ENCODE measurements at regions of chr3 and their contacts with region 1.

Region 1: DNA sequence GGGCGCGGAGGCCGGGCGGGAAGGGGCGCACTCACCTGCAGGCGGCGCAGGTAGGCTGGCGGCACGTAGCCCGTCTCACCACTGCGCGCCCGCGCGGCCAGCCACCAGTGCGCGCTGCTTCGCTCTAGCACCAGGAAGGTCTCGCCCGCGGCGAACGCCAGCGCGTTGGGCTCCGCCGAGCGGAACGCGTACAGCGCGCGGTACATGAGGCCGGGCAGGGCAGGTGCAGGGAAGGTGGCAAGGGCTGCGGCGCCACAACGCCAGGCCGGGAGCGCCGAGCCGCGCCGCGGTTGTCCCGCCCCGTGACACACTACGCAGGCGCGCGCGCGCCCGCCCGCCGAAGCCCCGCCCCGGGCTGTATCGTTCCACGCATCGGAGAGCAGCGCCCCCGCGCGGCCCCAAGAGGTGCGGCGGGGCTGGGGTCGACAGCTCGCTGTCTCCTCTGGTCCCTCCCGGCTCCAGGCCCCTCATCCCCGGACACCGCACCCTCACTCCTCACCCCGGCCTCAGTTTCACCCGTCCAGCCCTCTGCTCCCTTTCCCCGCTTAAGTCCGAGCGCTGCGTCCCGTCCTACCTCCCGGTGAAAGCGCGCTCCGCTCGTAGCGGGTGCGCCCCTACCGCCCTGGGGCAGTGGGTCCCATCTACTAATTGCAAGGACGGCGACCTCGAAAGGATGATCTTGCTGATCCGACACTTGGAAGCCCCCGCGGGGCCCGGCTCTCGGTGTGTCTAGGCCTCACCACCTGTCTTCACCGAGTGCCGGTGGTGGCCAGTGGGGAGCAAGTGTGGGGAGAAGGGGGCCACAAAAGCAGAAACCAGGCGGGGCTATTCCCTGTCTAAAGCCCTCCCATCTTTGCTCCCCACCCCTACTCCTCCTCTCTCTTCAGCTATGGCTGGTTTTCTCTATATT is at the start of gene NCKIPSD:
- DNase-seq: peak; percentile 87 to 94 (median 90)
- H3K4me3 ChIP-seq: peak within 1 kb of the TSS; percentile 59 to 82
- H3K4me3 Mint-ChIP-seq: peak within 1 kb of the TSS; percentile 87 to 99 (median 94)
- H3K27ac ChIP-seq: peak within 1 kb of the TSS; percentile 77
- H3K27ac Mint-ChIP-seq: peak within 1 kb of the TSS; percentile 81 to 94 (median 92)
- H3K4me1 ChIP-seq: peaks cover 34% of the 10 kb centered on the region
- H3K4me1 Mint-ChIP-seq: peaks cover 17 to 49% (median 27%) of the 10 kb centered on the region in 4 donors
- H3K27me3 ChIP-seq: no peaks in the 10 kb centered on the region
- H3K27me3 Mint-ChIP-seq: no peaks in the 10 kb centered on the region
- total RNA-seq, gene NCKIPSD: 20.1 to 21.7 TPM

Region 2: GRCh38 chr3:48273594-48274211 is 412.2 kb before region 1 on chr3:
- CTCF ChIA-PET with region 1: no interaction called
- POLR2A ChIA-PET with region 1: no interaction called
- intact Hi-C with region 1: loop called (anchors 1 kb)
- DNase-seq: peak; percentile 51 to 66 (median 60)
- H3K4me3 ChIP-seq: no peak overlapping the region
- H3K4me3 Mint-ChIP-seq: no peak overlapping the region
- H3K27ac ChIP-seq: no peak overlapping the region
- H3K27ac Mint-ChIP-seq: peak overlapping the region in 2 of 7 donors; percentile 12 to 74
- H3K4me1 ChIP-seq: peaks cover 15% of the 10 kb centered on the region
- H3K4me1 Mint-ChIP-seq: peaks cover 14 to 27% (median 21%) of the 10 kb centered on the region in 4 donors
- H3K27me3 ChIP-seq: no peaks in the 10 kb centered on the region
- H3K27me3 Mint-ChIP-seq: no peaks in the 10 kb centered on the region

Region 3: DNA sequence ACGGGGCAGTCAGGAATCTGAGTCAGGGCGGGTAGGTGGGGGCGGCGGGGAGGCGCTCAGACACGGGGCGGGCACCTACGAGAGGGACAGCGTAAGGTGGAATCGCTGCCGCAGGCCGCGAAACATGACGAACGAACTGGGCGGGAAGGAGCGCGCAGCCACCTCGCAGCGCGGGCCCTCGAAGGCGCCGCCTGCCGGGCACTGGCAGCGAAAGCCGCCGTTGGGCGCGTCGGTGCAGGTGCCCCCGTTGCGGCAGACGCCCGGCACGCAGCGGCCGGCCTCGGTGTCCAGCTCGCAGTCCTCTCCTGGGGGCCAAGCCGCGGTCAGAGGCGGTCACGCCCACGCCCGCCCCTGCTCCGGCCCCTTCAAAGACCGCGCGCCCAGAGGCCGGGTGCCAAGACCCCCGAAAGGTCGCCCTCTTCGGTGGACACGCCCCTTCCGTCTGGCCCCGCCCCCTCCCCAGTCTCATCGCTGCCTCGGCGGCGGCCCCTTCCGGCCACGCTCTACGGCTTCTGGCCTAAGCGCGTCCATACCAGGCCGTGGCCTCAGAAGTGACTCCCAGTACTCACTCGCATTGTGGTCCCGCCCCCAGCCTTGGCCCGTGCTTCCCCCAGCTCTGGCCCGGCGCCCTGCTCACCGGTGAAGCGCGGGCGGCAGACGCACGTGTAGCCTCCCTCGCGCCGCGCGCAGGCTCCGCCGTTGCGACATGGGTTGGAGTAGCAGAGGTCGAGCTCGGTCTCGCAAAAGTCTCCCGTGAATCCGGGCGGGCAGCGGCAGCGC is 29.6 kb before region 1 on chr3:
- CTCF ChIA-PET with region 1: interaction called, 6 read pairs
- POLR2A ChIA-PET with region 1: interaction called, 4 read pairs
- intact Hi-C with region 1: loop called (anchors 1 kb)
- DNase-seq: peak; percentile 86 to 91 (median 88)
- H3K4me3 ChIP-seq: peak overlapping the region; percentile 29 to 59
- H3K4me3 Mint-ChIP-seq: peak overlapping the region; percentile 80 to 88 (median 84)
- H3K27ac ChIP-seq: peak overlapping the region; percentile 38
- H3K27ac Mint-ChIP-seq: peak overlapping the region; percentile 82 to 93 (median 88)
- H3K4me1 ChIP-seq: peaks cover 19% of the 10 kb centered on the region
- H3K4me1 Mint-ChIP-seq: peaks cover 5 to 31% (median 10%) of the 10 kb centered on the region in 4 donors
- H3K27me3 ChIP-seq: no peaks in the 10 kb centered on the region
- H3K27me3 Mint-ChIP-seq: peaks cover 0 to 3% of the 10 kb centered on the region in 2 donors

Region 4: GRCh38 chr3:48847504-48848423 is 161.9 kb after region 1 on chr3 and contains the start of gene PRKAR2A:
- CTCF ChIA-PET with region 1: no interaction called
- POLR2A ChIA-PET with region 1: interaction called, 3 read pairs
- intact Hi-C with region 1: loop called (anchors 1 kb)
- DNase-seq: peak; percentile 69 to 82 (median 76)
- H3K4me3 ChIP-seq: peak within 1 kb of the TSS; percentile 69 to 89
- H3K4me3 Mint-ChIP-seq: peak within 1 kb of the TSS; percentile 85 to 91 (median 89)
- H3K27ac ChIP-seq: peak within 1 kb of the TSS; percentile 74
- H3K27ac Mint-ChIP-seq: peak within 1 kb of the TSS; percentile 94 to 98 (median 97)
- H3K4me1 ChIP-seq: peaks cover 33% of the 10 kb centered on the region
- H3K4me1 Mint-ChIP-seq: peaks cover 19 to 39% (median 29%) of the 10 kb centered on the region in 4 donors
- H3K27me3 ChIP-seq: no peaks in the 10 kb centered on the region
- H3K27me3 Mint-ChIP-seq: no peaks in the 10 kb centered on the region
- total RNA-seq, gene PRKAR2A: 41.7 to 45.0 TPM

Region 5: GRCh38 chr3:49007068-49007770 is 321.4 kb after region 1 on chr3 and contains the start of gene WDR6:
- CTCF ChIA-PET with region 1: no interaction called
- POLR2A ChIA-PET with region 1: interaction called, 3 read pairs
- intact Hi-C with region 1: loop called (anchors 5 kb)
- DNase-seq: peak; percentile 95 to 98 (median 97)
- H3K4me3 ChIP-seq: peak within 1 kb of the TSS; percentile 81 to 97
- H3K4me3 Mint-ChIP-seq: peak within 1 kb of the TSS; percentile 93 to 99 (median 98)
- H3K27ac ChIP-seq: peak within 1 kb of the TSS; percentile 87
- H3K27ac Mint-ChIP-seq: peak within 1 kb of the TSS; percentile 95 to 100 (median 99)
- H3K4me1 ChIP-seq: peaks cover 20% of the 10 kb centered on the region
- H3K4me1 Mint-ChIP-seq: peaks cover 15 to 37% (median 24%) of the 10 kb centered on the region in 4 donors
- H3K27me3 ChIP-seq: no peaks in the 10 kb centered on the region
- H3K27me3 Mint-ChIP-seq: no peaks in the 10 kb centered on the region
- total RNA-seq, gene WDR6: 287 to 295 TPM